ENCODE measurements at regions of chr11 and their contacts with region 1.

Region 1: DNA sequence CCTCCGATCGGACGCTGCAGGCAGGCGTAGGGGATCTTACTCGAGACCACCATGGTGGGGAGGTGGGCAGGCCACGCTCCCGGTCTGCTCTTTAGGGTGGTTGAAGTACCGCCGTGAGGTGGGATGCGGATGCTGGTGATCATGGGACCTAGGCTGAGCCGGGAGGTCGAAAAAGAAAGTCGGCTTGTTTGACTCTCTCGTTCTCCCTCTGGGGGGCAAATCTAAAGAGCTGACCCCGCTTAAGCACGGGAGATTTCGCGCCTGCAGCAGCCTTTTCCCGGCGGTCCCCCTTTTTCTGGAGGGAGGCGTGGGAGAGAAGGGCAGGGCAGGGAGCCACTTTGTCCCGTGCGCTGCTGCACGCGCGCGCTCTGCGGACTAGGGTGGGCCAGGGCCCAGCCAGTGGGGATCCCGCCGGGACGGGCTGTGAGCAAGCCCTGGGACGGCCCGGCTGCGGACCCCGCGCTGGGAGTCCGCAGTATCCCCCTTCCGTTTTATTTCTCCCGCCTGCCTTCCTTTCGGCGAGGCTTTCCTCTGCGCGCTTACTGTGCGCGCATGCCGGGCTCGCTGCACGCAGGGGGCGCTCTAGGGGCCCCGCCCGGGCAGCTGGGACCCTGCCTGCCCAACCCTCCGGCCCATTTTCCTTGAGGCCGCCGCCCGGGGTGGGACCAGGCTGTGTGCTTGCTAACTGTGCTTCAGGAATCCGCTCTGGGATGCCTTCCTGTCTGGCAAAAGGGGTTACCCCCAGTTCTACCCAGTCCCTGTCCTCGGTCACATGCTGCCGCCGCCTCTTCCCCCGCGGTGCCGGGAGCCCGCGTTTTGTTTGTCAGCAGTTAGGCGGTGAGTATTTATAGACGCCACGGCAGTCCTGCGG is 81.0 kb downstream of the PRR5L start:
- DNase-seq: no peak
- H3K4me3 ChIP-seq: peak overlapping the region; percentile 73
- H3K27me3 ChIP-seq: no peaks in the 10 kb centered on the region
- CTCF ChIP-seq: peak; percentile 84

Region 2: GRCh38 chr11:36363361-36364268 is 13.5 kb before region 1 on chr11:
- CTCF ChIA-PET with region 1: interaction called, 13 read pairs
- POLR2A ChIA-PET with region 1: no interaction called
- DNase-seq: no peak
- H3K4me3 ChIP-seq: no peak overlapping the region
- H3K27me3 ChIP-seq: no peaks in the 10 kb centered on the region
- CTCF ChIP-seq: no peak

Region 3: GRCh38 chr11:36469063-36469462 is 91.9 kb after region 1 on chr11:
- CTCF ChIA-PET with region 1: interaction called, 11 read pairs
- POLR2A ChIA-PET with region 1: interaction called, 3 read pairs
- DNase-seq: no peak
- H3K4me3 ChIP-seq: no peak overlapping the region
- H3K27me3 ChIP-seq: no peaks in the 10 kb centered on the region
- CTCF ChIP-seq: peak; percentile 51

Region 4: GRCh38 chr11:36577859-36578258 is 200.7 kb after region 1 on chr11:
- CTCF ChIA-PET with region 1: no interaction called
- POLR2A ChIA-PET with region 1: no interaction called
- DNase-seq: peak; percentile 24
- H3K4me3 ChIP-seq: no peak overlapping the region
- H3K27me3 ChIP-seq: peaks cover 2% of the 10 kb centered on the region; the same call in 1 of the 2 replicates
- CTCF ChIP-seq: no peak

Measured in BJ (cell line).